Right ventricle myocardium superior (tissue), 1 donor: ENCODE measurements at regions of chr3 and their contacts with region 1.

Region 1: DNA sequence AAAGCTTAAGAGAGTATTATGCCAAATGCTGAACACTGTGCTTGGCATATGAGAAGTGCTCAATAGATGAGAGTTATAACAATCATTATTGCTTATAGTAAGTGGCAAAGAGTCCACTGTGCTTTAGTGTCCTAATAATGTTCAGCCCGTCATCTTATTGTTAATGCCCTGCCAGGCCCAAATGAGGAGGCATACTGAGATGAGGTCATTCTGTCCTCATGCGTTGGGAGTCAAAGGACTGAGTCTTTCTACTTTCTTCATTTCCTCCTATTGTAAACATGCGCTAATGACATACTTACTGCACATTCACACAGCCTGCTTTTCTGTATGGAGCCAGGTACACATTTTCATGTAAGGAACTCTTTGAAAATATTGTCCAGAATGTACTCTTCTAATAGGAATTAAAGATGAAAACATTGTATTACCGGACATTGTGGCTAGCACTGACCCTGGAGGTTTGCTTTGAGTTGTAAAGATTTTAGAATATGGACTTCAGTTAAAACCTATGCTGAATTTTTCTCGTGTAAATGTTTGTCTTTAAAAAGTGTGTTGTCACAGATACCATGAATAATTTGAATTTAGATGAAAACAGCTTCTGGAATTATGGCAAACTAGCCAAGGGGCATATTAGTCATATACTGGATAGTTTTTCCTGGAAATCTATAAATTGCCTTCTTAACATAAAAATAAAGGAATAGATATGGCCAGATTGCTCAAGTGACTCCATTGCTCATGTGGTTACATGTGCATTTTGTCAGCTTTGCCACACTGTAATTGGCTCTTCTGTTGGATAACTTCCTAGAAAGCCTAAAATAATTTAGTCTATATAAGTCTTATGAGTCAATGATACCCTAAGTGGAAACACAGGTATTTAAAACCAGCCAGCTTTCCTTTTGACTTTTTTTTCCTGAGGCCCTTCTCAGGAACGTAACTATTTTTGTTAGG is 38.3 kb downstream of the KBTBD12 start:
- DNase-seq: no peak
- ATAC-seq: peak; percentile 73

Region 2: DNA sequence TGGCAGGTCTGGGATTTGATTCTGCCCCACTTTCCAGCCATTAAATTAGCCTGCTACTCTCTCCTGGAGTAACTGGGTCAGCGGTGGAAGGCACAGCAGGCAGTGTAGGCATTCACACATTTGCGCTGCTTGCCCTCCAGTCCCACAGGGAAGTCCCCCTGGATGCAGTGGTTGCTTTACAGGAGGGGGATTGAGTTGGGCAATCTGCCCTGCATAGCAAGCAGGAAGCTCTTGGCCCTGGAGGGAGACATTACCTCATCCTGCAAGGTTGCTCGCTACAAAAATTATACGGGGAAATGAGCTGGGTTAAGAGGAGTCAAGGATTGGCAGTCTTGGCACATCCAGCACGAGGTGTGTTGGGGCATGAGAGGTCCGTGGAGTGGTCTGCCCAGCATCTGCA is 340.4 kb before region 1 on chr3:
- intact Hi-C with region 1: no loop called
- DNase-seq: no peak
- ATAC-seq: no peak

Region 3: DNA sequence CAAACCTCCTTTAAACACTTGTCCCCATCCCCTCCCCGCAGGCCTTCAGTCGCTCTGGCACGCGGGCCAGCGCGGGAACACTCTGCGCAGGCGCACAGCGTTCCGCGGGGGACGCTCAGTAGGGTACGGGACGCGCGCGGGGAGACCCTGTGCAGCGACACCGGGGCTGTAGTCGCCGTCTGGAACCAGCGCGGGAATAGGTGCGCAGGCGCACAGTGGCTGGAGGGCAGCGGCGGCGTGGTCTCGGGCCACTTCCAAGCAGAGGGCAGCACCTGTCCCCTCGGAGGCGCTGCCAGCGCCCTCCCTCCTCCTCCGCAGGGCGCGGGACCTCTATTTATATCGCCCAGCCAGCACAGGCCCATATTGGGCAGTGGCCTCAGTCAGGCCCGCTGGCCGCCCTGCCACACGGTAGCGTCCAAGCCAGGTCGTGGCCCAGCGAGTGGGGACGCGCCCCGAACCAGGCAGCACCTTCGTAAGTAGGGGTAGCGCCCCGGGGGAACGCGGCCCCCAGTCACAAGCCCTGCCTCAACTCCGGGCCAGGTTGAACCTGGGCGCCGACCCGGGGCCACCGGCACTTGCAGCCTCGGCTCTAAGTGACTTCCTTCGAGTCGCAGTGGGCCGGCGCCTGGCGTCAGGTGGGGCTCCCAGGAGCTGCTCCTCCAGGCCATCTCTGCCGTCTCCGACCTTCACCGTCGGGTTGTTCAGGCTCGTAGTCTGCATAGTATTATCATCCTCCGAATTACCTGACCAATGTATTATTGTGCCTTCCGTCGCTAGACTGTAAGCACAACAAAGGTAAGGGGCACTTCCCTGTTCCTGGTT is 38.0 kb before region 1 on chr3 and contains the start of gene KBTBD12:
- intact Hi-C with region 1: loop called (anchors 5 kb)
- DNase-seq: peak; percentile 81
- ATAC-seq: peak; percentile 93
- total RNA-seq, gene KBTBD12: 29.4 TPM

Region 4: GRCh38 chr3:128095222-128095703 is 141.9 kb after region 1 on chr3:
- intact Hi-C with region 1: no loop called
- DNase-seq: peak; percentile 90
- ATAC-seq: peak; percentile 99